Mammary epithelial cell (primary cell): ENCODE measurements at regions of chr2 and their contacts with region 1.

Region 1: GRCh38 chr2:22481486-22482259 is 903.3 kb upstream of the KLHL29 start:
- DNase-seq: no peak
- H3K4me3 ChIP-seq: no peak overlapping the region
- H3K27ac ChIP-seq: no peak overlapping the region
- H3K4me1 ChIP-seq: no peaks in the 10 kb centered on the region
- H3K27me3 ChIP-seq: no peaks in the 10 kb centered on the region
- CTCF ChIP-seq: no peak

Region 2: DNA sequence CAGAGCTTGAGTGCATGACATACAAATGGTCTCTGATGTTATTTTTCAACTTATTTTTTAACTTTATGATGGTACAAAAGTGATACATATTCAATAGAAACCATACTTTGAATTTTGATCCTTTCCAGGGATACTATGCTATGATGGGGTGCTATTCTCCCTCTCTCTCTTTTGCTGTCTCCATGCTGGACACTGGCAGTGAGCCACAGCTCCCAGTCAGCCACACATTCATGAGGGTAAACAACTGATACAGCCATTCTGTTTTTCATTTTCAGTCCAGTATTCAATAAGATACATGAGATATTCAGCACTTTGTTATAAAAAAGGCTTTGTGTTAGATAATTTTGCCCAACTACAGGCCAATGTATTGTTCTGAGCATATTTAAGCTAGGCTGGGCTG is 44.0 kb after region 1 on chr2:
- CTCF ChIA-PET with region 1: no interaction called
- dilution Hi-C with region 1: loop called (anchors 5 kb)
- in situ Hi-C with region 1: no loop called
- intact Hi-C with region 1: no loop called
- DNase-seq: no peak
- H3K4me3 ChIP-seq: no peak overlapping the region
- H3K27ac ChIP-seq: no peak overlapping the region
- H3K4me1 ChIP-seq: no peaks in the 10 kb centered on the region
- H3K27me3 ChIP-seq: no peaks in the 10 kb centered on the region
- CTCF ChIP-seq: no peak